Transverse colon (tissue), 4 donors: ENCODE measurements at regions of chr21 and their contacts with region 1.

Region 1: DNA sequence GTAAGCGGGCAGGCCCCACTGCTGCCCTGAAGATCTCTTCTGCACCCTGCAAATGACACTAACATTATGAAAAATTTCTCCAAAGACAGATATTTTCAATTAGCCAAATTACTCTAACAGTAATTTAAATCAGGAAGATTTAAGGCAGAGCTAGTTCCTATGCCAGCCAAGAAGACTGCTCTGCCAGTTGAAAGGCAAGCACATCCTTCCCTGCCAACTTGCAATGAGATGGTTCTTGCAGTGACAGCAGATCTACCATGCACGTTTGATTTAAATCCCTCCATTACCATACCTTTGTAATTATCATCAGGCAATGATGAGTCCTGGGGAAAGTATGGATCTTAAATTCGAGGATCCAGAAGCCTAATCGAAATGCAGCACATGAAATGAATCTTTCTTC is 76.5 kb downstream of the SAMSN1 start:
- DNase-seq: no peak
- H3K4me3 ChIP-seq: no peak overlapping the region
- H3K27ac ChIP-seq: no peak overlapping the region
- H3K4me1 ChIP-seq: no peaks in the 10 kb centered on the region
- H3K27me3 ChIP-seq: no peaks in the 10 kb centered on the region
- CTCF ChIP-seq: no peak
- EP300 ChIP-seq: no peak
- POLR2A ChIP-seq: no peak

Region 2: GRCh38 chr21:14448784-14449183 is 20.9 kb before region 1 on chr21:
- in situ Hi-C with region 1: no loop called
- intact Hi-C with region 1: loop called (anchors 1 kb)
- DNase-seq: no peak
- H3K4me3 ChIP-seq: no peak overlapping the region
- H3K27ac ChIP-seq: no peak overlapping the region
- H3K4me1 ChIP-seq: peaks cover 0 to 5% (median 2%) of the 10 kb centered on the region in 4 donors
- H3K27me3 ChIP-seq: no peaks in the 10 kb centered on the region
- CTCF ChIP-seq: no peak
- EP300 ChIP-seq: no peak
- POLR2A ChIP-seq: no peak

Region 3: DNA sequence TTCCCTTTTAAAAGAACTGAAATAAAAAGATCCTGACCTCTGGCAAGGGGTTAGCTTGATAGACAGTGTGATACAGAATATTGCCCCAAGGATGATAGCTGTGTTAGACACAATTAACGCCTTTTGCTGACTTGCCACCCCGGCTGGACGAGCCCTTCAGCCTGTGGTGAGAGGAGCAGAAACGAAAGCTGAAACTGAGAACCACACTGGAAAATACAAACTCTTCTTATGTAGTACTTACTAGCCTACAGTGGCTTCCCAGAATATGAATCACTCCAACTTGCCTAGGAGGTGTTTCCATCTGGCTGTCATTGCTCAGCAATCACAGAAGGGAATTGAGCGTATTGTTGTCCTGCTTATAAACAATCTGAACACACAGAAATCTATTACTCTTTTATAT is 53.6 kb after region 1 on chr21:
- in situ Hi-C with region 1: no loop called
- intact Hi-C with region 1: loop called (anchors 10 kb)
- DNase-seq: no peak
- H3K4me3 ChIP-seq: no peak overlapping the region
- H3K27ac ChIP-seq: peak overlapping the region; percentile 13 to 34 (median 19)
- H3K4me1 ChIP-seq: no peaks in the 10 kb centered on the region
- H3K27me3 ChIP-seq: no peaks in the 10 kb centered on the region
- CTCF ChIP-seq: no peak
- EP300 ChIP-seq: no peak
- POLR2A ChIP-seq: no peak